BJ (cell line): ENCODE measurements at regions of chr1 and their contacts with region 1.

Region 1: GRCh38 chr1:177884479-177885021 is 85.3 kb downstream of the SEC16B start:
- DNase-seq: no peak
- H3K4me3 ChIP-seq: no peak overlapping the region
- H3K27me3 ChIP-seq: no peaks in the 10 kb centered on the region
- CTCF ChIP-seq: no peak

Region 2: GRCh38 chr1:177898003-177898654 is 13.6 kb after region 1 on chr1:
- CTCF ChIA-PET with region 1: interaction called, 11 read pairs
- POLR2A ChIA-PET with region 1: no interaction called
- DNase-seq: no peak
- H3K4me3 ChIP-seq: no peak overlapping the region
- H3K27me3 ChIP-seq: peaks cover 2% of the 10 kb centered on the region; the same call in 1 of the 2 replicates
- CTCF ChIP-seq: no peak